B cell (primary cell): ENCODE measurements at regions of chr12 and their contacts with region 1.

Region 1: GRCh38 chr12:121095544-121096198 is 37.0 kb upstream of the P2RX7 start:
- DNase-seq: peak; percentile 86
- ATAC-seq: peak; percentile 97
- H3K4me3 ChIP-seq: peak overlapping the region in 4 of 5 experiments; percentile 31 to 59 (median 48)
- H3K4me3 Mint-ChIP-seq: peak overlapping the region; percentile 87
- H3K27ac ChIP-seq: no peak overlapping the region
- H3K27ac Mint-ChIP-seq: peak overlapping the region; percentile 5
- H3K4me1 ChIP-seq: peaks cover 15 to 20% of the 10 kb centered on the region in 2 donors
- H3K4me1 Mint-ChIP-seq: peaks cover 26% of the 10 kb centered on the region
- H3K27me3 ChIP-seq: peaks cover 0 to 5% (median 0%) of the 10 kb centered on the region in 4 experiments
- H3K27me3 Mint-ChIP-seq: peaks cover 13% of the 10 kb centered on the region
- CTCF ChIP-seq: peak; percentile 92

Region 2: DNA sequence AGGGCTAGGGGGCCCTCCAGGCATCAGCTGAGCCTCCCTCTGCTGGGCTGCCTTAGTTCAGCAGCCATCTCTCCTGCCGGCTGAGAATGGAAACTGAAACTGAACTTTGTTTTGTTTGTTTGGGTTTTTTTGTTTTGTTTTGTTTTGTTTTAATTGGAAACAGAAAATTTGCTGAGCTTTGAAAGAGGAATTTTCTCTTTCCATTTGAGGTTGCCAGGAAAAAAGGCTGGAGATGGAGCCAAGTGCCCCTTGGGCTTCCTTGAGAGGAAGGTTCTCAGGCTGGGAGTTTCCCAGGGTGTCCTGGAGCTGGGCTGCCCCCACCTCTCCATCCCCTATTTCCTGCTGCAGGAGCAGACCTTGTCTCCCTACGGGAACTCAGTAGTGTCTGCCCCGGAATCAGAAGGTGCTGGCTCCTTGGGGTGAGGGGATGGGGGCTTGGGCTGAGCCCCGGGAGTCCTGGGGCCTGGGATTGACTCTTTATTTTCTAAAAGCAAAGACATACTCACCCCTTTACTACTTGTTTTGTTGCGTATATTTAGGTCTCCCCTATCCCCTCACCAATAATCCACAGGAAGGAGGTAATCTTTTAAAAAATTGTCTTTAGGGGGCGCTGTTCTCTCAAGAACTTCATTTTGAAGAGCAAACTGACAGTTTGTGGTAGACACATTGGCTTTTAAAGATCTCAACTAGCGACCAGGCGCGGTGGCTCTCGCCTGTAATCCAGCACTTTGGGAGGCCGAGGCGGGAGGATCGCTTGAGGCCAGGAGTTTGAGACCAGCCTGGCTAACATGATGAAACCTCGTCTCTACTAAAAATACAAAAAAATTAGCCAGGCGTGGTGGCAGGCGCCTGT is 35.3 kb before region 1 on chr12:
- CTCF ChIA-PET with region 1: interaction called, 10 read pairs
- POLR2A ChIA-PET with region 1: no interaction called
- intact Hi-C with region 1: loop called (anchors 1 kb)
- DNase-seq: peak; percentile 82
- ATAC-seq: peak; percentile 96
- H3K4me3 ChIP-seq: peak overlapping the region; percentile 47 to 65 (median 60)
- H3K4me3 Mint-ChIP-seq: peak overlapping the region; percentile 91
- H3K27ac ChIP-seq: peak overlapping the region; percentile 47 to 82
- H3K27ac Mint-ChIP-seq: peak overlapping the region; percentile 96
- H3K4me1 ChIP-seq: peaks cover 6 to 17% of the 10 kb centered on the region in 2 donors
- H3K4me1 Mint-ChIP-seq: peaks cover 11% of the 10 kb centered on the region
- H3K27me3 ChIP-seq: no peaks in the 10 kb centered on the region
- H3K27me3 Mint-ChIP-seq: no peaks in the 10 kb centered on the region
- CTCF ChIP-seq: peak; percentile 70